ENCODE measurements at regions of chr10 and their contacts with region 1.

Region 1: DNA sequence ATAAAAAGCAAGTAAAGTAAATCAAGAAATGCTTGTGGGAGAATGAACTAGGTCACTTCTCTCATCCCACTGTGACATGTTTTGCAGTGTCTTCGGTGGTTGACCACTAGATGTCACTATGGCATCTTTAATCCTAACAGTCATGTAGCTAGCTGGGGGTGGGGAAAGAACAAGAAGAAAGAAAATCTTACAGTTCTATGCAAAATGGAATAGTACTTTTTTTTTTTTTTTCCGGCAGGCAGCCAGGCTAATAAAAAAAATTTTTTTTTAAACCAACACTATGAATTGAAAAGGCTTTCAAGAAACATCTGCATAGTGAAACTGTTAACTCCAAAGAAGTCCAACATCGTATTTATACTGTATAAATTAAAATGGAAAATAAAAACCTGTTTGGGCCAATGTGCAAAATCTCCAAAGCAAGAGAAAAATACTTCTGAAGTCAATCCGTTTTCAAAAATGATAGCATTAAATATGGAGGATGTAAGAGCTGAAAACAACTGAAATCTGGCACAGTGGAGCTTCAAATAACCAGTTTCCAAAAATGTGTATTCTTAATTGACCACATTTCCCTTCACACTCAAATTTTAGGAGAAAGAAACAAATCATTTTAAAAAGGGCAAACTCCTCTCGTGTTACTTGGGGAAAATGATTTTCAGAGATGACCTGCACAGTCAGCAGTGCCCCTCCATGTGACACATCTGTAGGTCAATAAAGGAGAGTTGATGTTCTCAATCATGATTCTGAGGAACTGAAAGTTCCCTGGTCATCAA is 38.5 kb downstream of the CDK1 start:
- DNase-seq: peak; percentile 56
- H3K4me3 Mint-ChIP-seq: no peak overlapping the region
- H3K27ac Mint-ChIP-seq: no peak overlapping the region
- H3K4me1 Mint-ChIP-seq: no peaks in the 10 kb centered on the region
- H3K27me3 Mint-ChIP-seq: no peaks in the 10 kb centered on the region

Region 2: GRCh38 chr10:60944159-60944909 is 127.5 kb after region 1 on chr10 and contains the start of gene RHOBTB1:
- CTCF ChIA-PET with region 1: interaction called, 4 read pairs
- intact Hi-C with region 1: loop called (anchors 5 kb)
- DNase-seq: peak; percentile 33
- H3K4me3 Mint-ChIP-seq: peak within 1 kb of the TSS; percentile 62
- H3K27ac Mint-ChIP-seq: no peak within 1 kb of the TSS
- H3K4me1 Mint-ChIP-seq: peaks cover 8% of the 10 kb centered on the region
- H3K27me3 Mint-ChIP-seq: peaks cover 62% of the 10 kb centered on the region
- total RNA-seq, gene RHOBTB1: not detected

Region 3: DNA sequence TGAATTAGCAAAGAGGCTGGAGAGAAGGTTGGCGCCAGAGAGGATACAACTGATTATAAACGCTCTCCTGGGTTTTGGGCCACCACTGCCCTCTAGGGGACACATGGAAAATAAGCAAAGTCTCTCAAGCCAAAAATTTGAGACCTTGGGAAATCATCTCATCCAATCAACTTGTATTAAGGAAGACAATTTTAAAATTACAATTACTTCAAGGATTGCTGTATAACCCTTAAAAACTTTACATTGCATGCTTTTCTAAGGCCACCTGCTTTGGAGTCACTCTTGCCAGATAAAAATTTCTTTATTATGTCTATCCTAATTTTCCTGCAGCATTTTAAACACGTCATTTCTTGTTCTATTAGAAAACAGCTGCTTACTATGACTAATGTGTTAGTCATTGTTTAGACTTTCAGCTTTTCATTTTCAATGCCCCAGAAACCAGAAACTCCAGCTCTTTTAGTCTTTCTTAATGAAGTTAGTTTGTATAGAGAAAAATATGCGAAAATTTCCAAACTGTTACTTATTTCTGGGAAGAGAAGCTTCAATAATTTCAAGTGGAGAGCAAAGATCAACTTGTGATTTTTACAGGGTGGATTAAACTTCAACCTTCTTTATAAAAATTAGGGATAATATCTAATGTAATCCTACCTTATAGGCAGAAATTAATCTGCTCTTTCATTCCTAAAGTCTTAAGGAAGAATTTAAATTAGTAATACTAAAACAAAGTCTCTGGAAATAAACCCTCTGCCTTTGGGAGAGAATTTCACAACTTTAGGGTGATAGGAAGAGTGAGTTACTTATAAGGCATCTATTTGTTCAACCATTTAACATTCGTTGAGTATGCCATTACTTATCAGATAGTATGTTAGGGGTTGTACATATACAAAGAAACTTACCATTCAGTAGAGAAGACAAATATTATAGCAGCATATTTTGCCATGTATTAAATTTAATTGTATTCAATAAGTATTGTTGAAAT is 147.7 kb after region 1 on chr10:
- CTCF ChIA-PET with region 1: interaction called, 5 read pairs
- intact Hi-C with region 1: loop called (anchors 1 kb)
- DNase-seq: peak; percentile 66
- H3K4me3 Mint-ChIP-seq: no peak overlapping the region
- H3K27ac Mint-ChIP-seq: no peak overlapping the region
- H3K4me1 Mint-ChIP-seq: peaks cover 17% of the 10 kb centered on the region
- H3K27me3 Mint-ChIP-seq: peaks cover 15% of the 10 kb centered on the region

Region 4: GRCh38 chr10:61140765-61141392 is 324.1 kb after region 1 on chr10:
- CTCF ChIA-PET with region 1: interaction called, 3 read pairs
- intact Hi-C with region 1: loop called (anchors 5 kb)
- DNase-seq: no peak
- H3K4me3 Mint-ChIP-seq: no peak overlapping the region
- H3K27ac Mint-ChIP-seq: no peak overlapping the region
- H3K4me1 Mint-ChIP-seq: no peaks in the 10 kb centered on the region
- H3K27me3 Mint-ChIP-seq: peaks cover 3% of the 10 kb centered on the region

Region 5: GRCh38 chr10:61733358-61733940 is 916.6 kb after region 1 on chr10:
- CTCF ChIA-PET with region 1: interaction called, 4 read pairs
- intact Hi-C with region 1: loop called (anchors 5 kb)
- DNase-seq: peak; percentile 37
- H3K4me3 Mint-ChIP-seq: no peak overlapping the region
- H3K27ac Mint-ChIP-seq: no peak overlapping the region
- H3K4me1 Mint-ChIP-seq: no peaks in the 10 kb centered on the region
- H3K27me3 Mint-ChIP-seq: peaks cover 30% of the 10 kb centered on the region

Measured in activated naive CD4-positive, alpha-beta T cell treated with anti-CD3 and anti-CD28 coated beads for 36 hours (primary cell).